H1 (cell line): ENCODE measurements at regions of chr16 and their contacts with region 1.

Region 1: GRCh38 chr16:90015558-90016339 is 3.5 kb downstream of the DBNDD1 start:
- DNase-seq: no peak
- H3K4me3 ChIP-seq: no peak overlapping the region
- H3K27ac ChIP-seq: no peak overlapping the region
- H3K4me1 ChIP-seq: peaks cover 2 to 8% (median 6%) of the 10 kb centered on the region in 4 experiments; a peak in 6 of 7 replicates
- H3K27me3 ChIP-seq: no peaks in the 10 kb centered on the region; a peak in 2 of 7 replicates
- CTCF ChIP-seq: no peak
- EP300 ChIP-seq: no peak
- POLR2A ChIP-seq: no peak
- RAD21 ChIP-seq: no peak

Region 2: DNA sequence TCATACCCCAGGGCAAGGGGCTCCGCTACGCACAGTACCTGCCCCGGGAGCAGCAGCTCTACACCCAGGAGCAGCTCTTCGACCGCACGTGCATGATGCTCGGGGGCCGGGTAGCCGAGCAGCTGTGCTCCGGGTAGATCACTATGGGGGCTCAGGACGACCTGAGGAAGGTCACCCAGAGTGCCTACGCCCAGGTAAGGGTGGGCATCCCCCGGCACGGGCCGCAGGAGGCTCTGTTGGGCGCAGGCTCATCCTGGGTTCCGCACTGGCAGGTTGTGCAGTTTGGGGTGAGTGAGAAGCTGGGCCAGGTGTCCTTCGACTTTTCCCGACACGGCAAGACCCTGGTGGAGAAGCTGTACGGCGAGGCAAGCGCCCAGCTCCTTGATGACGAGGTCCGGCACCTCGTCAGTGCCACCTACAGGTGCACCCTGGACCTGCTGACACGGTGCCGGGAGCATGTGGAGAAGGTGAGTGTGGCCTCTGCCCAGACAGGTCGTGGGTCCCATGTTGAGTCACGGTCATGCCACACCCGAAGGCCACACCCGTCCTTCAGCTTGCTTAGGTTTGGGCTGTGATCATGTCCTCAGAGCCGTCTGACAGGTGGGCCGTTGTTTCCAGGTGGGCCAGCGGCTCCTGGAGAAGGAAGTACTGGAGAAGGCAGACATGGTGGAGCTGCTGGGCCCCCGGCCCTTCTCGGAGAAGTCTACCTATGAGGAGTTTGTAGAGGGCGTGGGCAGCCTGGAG is 15.7 kb before region 1 on chr16:
- CTCF ChIA-PET with region 1: interaction called, 9 read pairs
- POLR2A ChIA-PET with region 1: interaction called, 81 read pairs
- DNase-seq: no peak
- H3K4me3 ChIP-seq: no peak overlapping the region
- H3K27ac ChIP-seq: no peak overlapping the region
- H3K4me1 ChIP-seq: no peaks in the 10 kb centered on the region
- H3K27me3 ChIP-seq: no peaks in the 10 kb centered on the region
- CTCF ChIP-seq: peak; percentile 19 to 62 (median 49); a peak in 3 of 4 replicates
- EP300 ChIP-seq: no peak
- POLR2A ChIP-seq: no peak
- RAD21 ChIP-seq: no peak; a peak in 1 of 4 replicates